Activated CD4-positive, alpha-beta memory T cell treated with anti-CD3 and anti-CD28 coated beads for 36 hours (primary cell): ENCODE measurements at regions of chr5 and their contacts with region 1.

Region 1: GRCh38 chr5:50962934-50963872 is 296.8 kb downstream of the PARP8 start:
- DNase-seq: peak; percentile 80
- H3K4me3 Mint-ChIP-seq: peak overlapping the region; percentile 75
- H3K27ac Mint-ChIP-seq: no peak overlapping the region
- H3K4me1 Mint-ChIP-seq: peaks cover 39% of the 10 kb centered on the region
- H3K27me3 Mint-ChIP-seq: peaks cover 50% of the 10 kb centered on the region

Region 2: GRCh38 chr5:51380603-51381207 is 417.5 kb after region 1 on chr5:
- CTCF ChIA-PET with region 1: no interaction called
- POLR2A ChIA-PET with region 1: no interaction called
- intact Hi-C with region 1: loop called (anchors 2 kb)
- DNase-seq: no peak
- H3K4me3 Mint-ChIP-seq: no peak overlapping the region
- H3K27ac Mint-ChIP-seq: no peak overlapping the region
- H3K4me1 Mint-ChIP-seq: peaks cover 8% of the 10 kb centered on the region
- H3K27me3 Mint-ChIP-seq: peaks cover 86% of the 10 kb centered on the region

Region 3: GRCh38 chr5:52356311-52356918 is 1393.2 kb after region 1 on chr5:
- CTCF ChIA-PET with region 1: no interaction called
- POLR2A ChIA-PET with region 1: no interaction called
- intact Hi-C with region 1: loop called (anchors 5 kb)
- DNase-seq: no peak
- H3K4me3 Mint-ChIP-seq: no peak overlapping the region
- H3K27ac Mint-ChIP-seq: no peak overlapping the region
- H3K4me1 Mint-ChIP-seq: no peaks in the 10 kb centered on the region
- H3K27me3 Mint-ChIP-seq: no peaks in the 10 kb centered on the region

Region 4: GRCh38 chr5:52560366-52560765 is 1597.2 kb after region 1 on chr5:
- CTCF ChIA-PET with region 1: interaction called, 5 read pairs
- POLR2A ChIA-PET with region 1: no interaction called
- intact Hi-C with region 1: loop called (anchors 10 kb)
- DNase-seq: no peak
- H3K4me3 Mint-ChIP-seq: no peak overlapping the region
- H3K27ac Mint-ChIP-seq: no peak overlapping the region
- H3K4me1 Mint-ChIP-seq: no peaks in the 10 kb centered on the region
- H3K27me3 Mint-ChIP-seq: peaks cover 7% of the 10 kb centered on the region

Region 5: GRCh38 chr5:52657247-52657645 is 1694.0 kb after region 1 on chr5:
- CTCF ChIA-PET with region 1: interaction called, 20 read pairs
- POLR2A ChIA-PET with region 1: no interaction called
- intact Hi-C with region 1: loop called (anchors 1 kb)
- DNase-seq: no peak
- H3K4me3 Mint-ChIP-seq: no peak overlapping the region
- H3K27ac Mint-ChIP-seq: no peak overlapping the region
- H3K4me1 Mint-ChIP-seq: no peaks in the 10 kb centered on the region
- H3K27me3 Mint-ChIP-seq: peaks cover 6% of the 10 kb centered on the region